ENCODE measurements at regions of chr11 and their contacts with region 1.

Region 1: DNA sequence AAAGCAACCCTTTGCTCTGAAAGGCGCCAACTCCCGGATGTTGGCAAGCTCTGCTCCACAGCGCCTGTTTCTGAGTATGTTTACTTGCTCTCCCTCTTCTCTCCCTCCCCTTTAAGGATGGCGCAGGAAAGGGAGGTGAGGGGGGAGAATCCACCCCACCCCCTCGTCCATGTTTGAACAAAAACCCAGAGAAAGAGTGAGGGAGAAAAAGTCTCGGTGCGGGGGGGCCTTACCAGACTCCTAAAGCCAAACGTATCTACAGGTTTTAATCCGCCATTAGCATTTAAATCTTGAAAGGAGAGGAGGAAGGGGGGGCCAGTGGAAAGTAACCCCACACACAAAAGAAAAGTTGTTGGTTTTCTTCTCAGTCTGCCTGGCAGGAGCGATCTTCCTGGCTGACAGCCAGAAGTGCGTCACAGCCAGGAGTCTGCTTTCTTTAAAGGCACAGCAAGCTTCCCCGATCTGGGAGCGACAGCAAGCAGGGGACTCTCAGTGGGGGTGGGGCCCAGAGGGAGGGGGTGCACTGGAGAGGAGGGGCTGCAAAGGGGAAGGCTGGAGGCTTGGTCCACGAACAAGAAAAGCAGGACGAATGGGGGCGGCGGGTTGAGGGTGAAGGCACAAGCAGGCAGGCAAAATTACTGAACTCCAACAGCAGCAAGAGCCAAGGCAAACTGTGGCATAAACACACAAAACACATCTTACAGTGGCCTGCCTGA is 39.5 kb downstream of the NUMA1 start:
- DNase-seq: peak; percentile 98
- ATAC-seq: peak; percentile 81

Region 2: DNA sequence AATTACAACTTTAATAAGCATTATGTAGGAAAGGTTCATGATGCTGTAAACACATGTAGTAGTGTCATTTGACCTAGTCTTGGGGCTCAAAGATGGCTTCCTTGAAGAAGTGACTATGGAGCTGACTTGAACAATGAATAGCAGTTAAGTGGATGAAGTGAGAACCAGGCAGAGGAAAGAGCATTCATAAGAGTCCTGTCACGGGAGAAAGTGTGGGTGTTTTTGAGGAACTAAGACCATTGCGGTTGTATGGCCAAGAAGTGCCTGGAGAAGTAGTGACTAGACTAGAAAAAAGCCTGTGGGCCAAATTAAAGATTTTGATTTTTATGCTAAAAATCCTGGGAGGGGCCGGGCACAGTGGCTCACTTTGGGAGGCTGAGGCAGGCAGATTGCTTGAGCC is 49.4 kb before region 1 on chr11:
- intact Hi-C with region 1: no loop called
- DNase-seq: no peak
- ATAC-seq: peak; percentile 38

Region 3: GRCh38 chr11:72080256-72080974 is 39.5 kb after region 1 on chr11 and contains the starts of genes LRRC51 and NUMA1:
- intact Hi-C with region 1: loop called (anchors 5 kb)
- DNase-seq: peak; percentile 99
- ATAC-seq: peak; percentile 96
- total RNA-seq, gene LRRC51: 5.4 TPM
- total RNA-seq, gene NUMA1: 85.7 TPM

Region 4: DNA sequence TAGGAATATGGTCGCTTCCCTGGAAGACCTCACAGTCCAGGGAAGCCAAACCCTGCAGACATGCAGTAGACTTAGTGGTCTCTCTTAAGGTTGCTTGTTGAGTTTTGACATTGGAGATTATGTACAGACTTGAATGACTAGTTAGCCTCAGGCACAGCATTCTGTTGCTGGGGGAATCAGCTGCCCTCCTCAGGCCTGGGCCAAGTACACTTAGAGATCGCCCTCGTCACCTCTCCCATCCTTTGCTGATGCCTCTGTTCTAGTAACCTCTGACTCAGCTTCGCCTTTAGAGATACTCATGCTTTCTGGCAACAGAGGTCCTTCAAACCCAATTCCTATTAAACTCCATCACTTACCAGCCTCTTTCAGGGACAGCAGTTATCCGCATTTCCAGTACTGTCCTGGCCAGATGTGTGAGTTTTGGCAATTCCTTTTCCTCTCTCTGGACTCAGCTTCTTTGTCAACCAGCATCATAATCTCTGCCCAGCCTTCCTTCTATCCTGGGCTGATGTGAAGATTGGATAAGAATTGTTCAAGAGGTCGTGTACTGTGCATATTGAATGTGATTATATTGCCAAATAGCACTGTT is 72.4 kb after region 1 on chr11:
- intact Hi-C with region 1: no loop called
- DNase-seq: no peak
- ATAC-seq: no peak